Heart left ventricle (tissue), 16 donors: ENCODE measurements at regions of chr2 and their contacts with region 1.

Region 1: DNA sequence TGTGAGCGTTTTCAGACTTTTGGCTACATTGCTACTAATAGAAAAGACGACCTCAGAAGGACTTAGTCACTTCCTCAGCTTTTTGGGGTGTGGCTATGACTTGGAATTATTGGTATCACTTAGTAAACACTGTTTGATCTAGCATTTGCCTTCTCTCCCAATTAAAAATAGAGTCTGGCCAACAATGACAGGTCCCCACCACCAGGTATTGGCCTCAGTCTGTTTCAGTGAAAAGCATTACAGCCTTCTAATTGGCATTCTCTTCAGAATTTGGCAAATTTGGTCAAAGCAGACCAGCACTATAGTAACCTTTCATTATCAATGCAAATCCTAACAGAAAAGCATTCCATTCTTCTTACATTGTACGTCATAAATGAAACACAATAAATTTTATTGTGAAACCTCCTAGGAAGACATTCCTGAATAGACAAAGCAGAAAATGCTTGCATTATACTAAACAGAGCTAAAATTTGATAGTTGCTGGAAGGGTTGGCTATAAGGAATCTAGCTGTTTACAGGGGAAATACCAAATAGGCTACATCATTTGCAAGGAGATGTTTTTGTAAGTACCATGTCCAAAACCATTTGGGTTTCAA is 613.9 kb downstream of the IRS1 start:
- DNase-seq: no peak
- ATAC-seq: peak; percentile 33 to 79 (median 72)
- H3K4me3 ChIP-seq: no peak overlapping the region
- H3K27ac ChIP-seq: peak overlapping the region in 8 of 12 donors; percentile 9 to 61 (median 42)
- H3K4me1 ChIP-seq: peaks cover 0 to 11% (median 0%) of the 10 kb centered on the region in 12 donors
- H3K27me3 ChIP-seq: no peaks in the 10 kb centered on the region
- CTCF ChIP-seq: no peak
- POLR2A ChIP-seq: no peak

Region 2: GRCh38 chr2:226137201-226137811 is 48.4 kb before region 1 on chr2:
- intact Hi-C with region 1: loop called in 1 of 10 experiments (anchors 2 kb)
- DNase-seq: no peak
- ATAC-seq: no peak
- H3K4me3 ChIP-seq: no peak overlapping the region
- H3K27ac ChIP-seq: peak overlapping the region in 1 of 12 donors; percentile 49
- H3K4me1 ChIP-seq: peaks cover 0 to 14% (median 0%) of the 10 kb centered on the region in 12 donors
- H3K27me3 ChIP-seq: no peaks in the 10 kb centered on the region
- CTCF ChIP-seq: no peak
- POLR2A ChIP-seq: no peak

Region 3: GRCh38 chr2:226234183-226234582 is 48.5 kb after region 1 on chr2:
- intact Hi-C with region 1: no loop called
- DNase-seq: no peak
- ATAC-seq: no peak
- H3K4me3 ChIP-seq: no peak overlapping the region
- H3K27ac ChIP-seq: no peak overlapping the region
- H3K4me1 ChIP-seq: no peaks in the 10 kb centered on the region
- H3K27me3 ChIP-seq: no peaks in the 10 kb centered on the region
- CTCF ChIP-seq: no peak
- POLR2A ChIP-seq: no peak